Lower leg skin (tissue), 4 donors: ENCODE measurements at regions of chr3 and their contacts with region 1.

Region 1: GRCh38 chr3:193446965-193447602 is 68.5 kb upstream of the ATP13A5 start:
- DNase-seq: no peak
- H3K4me3 ChIP-seq: no peak overlapping the region
- CTCF ChIP-seq: no peak
- POLR2A ChIP-seq: no peak

Region 2: GRCh38 chr3:193253986-193254660 is 193.0 kb before region 1 on chr3:
- intact Hi-C with region 1: loop called (anchors 10 kb)
- DNase-seq: no peak
- H3K4me3 ChIP-seq: no peak overlapping the region
- CTCF ChIP-seq: no peak
- POLR2A ChIP-seq: no peak

Region 3: GRCh38 chr3:193470710-193471109 is 23.6 kb after region 1 on chr3:
- intact Hi-C with region 1: no loop called
- DNase-seq: no peak
- H3K4me3 ChIP-seq: no peak overlapping the region
- CTCF ChIP-seq: no peak
- POLR2A ChIP-seq: no peak